ENCODE measurements at regions of chr2 and their contacts with region 1.

Region 1: GRCh38 chr2:168346725-168347477 is 99.5 kb upstream of the STK39 start:
- DNase-seq: no peak
- H3K4me3 ChIP-seq: peak overlapping the region; percentile 38
- H3K27me3 ChIP-seq: no peaks in the 10 kb centered on the region; the same call in 1 of the 2 replicates
- CTCF ChIP-seq: peak; percentile 67

Region 2: GRCh38 chr2:168687314-168687713 is 340.4 kb after region 1 on chr2:
- CTCF ChIA-PET with region 1: interaction called, 40 read pairs
- POLR2A ChIA-PET with region 1: no interaction called
- DNase-seq: no peak
- H3K4me3 ChIP-seq: no peak overlapping the region
- H3K27me3 ChIP-seq: no peaks in the 10 kb centered on the region
- CTCF ChIP-seq: peak; percentile 20; the same call in 1 of the 2 replicates

Region 3: DNA sequence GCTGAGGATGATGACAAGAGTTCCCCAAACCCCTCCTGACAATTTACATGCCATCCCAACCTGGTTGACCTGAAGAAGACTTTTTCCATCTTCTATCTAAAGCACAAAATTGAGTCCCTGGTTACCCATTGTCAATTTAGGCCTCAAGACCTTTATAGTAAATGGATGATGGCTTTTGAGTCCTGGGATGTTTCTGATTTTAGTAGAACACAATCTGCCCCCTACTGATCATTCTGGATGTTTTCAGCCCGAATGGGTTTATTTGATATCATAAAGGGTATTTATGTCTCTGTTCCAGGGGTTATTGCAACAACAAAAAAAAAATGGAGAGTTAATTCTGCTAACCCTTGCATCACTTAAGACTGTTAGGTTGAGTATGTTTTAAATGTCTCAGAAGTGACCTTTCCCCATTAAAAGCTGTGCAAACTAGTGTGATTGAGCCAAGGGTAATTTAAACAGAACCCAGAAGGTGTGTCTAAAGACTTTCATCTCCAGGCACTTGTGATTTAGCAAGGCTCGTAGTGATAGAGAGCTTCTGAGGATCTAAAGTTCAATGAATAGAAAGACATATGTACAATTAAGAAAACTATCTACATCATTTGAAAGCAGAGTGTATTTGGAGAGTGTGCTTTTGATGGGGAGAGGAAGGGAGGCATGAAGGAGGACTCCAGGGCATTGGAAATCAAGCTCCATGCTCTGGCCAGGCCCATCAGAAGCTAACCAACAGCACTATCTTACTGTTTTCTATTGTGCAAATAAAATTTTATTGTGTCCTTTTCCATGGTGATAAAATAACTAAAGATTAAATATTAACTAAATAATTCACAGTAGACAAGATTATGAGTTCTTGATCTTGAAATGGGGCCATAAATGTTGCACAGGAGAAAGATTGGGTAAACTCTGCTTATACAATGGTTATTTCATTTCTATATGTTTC is 358.9 kb after region 1 on chr2:
- CTCF ChIA-PET with region 1: interaction called, 38 read pairs
- POLR2A ChIA-PET with region 1: no interaction called
- DNase-seq: no peak
- H3K4me3 ChIP-seq: no peak overlapping the region
- H3K27me3 ChIP-seq: no peaks in the 10 kb centered on the region
- CTCF ChIP-seq: peak; percentile 55

Region 4: GRCh38 chr2:168758970-168759820 is 412.3 kb after region 1 on chr2:
- CTCF ChIA-PET with region 1: interaction called, 54 read pairs
- POLR2A ChIA-PET with region 1: no interaction called
- DNase-seq: no peak
- H3K4me3 ChIP-seq: no peak overlapping the region
- H3K27me3 ChIP-seq: no peaks in the 10 kb centered on the region
- CTCF ChIP-seq: peak; percentile 69

Measured in BJ (cell line).